ENCODE measurements at regions of chr15 and their contacts with region 1.

Region 1: DNA sequence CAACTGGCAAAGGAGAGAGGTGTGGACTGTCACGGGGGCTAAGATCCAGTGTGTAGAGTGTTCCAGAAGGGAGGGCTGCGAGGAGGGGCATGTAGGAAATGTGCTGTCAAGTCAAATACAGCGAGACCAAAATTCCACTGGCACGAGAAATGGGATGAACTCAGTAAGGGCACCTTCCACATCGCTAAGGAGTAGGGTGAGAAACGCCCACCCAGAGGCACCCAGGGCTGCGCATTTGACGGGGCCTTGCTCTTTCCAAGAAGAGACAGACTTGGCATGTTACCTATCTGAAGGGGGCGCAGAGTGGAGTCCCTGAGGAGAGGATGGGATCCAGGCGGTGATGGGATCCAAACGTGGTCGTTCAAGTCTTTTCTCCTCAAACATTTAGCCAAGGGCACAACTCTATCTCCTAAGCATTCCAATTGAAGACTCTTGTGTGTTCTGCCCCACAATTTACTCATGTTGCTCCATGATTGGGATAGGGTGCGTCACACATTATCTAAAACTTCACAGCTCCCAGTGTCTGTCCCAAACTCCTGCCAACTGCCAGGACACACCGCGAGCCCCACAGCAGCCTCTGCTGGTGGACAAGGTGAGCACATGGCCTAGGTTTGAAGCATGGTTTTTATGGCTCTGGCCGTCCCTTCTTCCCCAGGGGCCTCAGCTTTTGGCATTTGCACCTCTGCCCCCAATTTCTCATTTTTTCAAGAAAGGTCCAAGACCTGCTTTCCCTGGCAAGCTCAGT is 7.6 kb downstream of the SELENOS start:
- DNase-seq: no peak
- ATAC-seq: no peak
- H3K4me3 ChIP-seq: no peak overlapping the region
- H3K27ac ChIP-seq: no peak overlapping the region
- H3K4me1 ChIP-seq: peaks cover 15% of the 10 kb centered on the region
- H3K27me3 ChIP-seq: no peaks in the 10 kb centered on the region
- CTCF ChIP-seq: peak; percentile 30 to 60 (median 40); a peak in 5 of 6 replicates
- EP300 ChIP-seq: no peak
- POLR2A ChIP-seq: no peak; the same call in 1 of the 2 replicates
- RAD21 ChIP-seq: peak; percentile 16; the same call in 1 of the 2 replicates

Region 2: DNA sequence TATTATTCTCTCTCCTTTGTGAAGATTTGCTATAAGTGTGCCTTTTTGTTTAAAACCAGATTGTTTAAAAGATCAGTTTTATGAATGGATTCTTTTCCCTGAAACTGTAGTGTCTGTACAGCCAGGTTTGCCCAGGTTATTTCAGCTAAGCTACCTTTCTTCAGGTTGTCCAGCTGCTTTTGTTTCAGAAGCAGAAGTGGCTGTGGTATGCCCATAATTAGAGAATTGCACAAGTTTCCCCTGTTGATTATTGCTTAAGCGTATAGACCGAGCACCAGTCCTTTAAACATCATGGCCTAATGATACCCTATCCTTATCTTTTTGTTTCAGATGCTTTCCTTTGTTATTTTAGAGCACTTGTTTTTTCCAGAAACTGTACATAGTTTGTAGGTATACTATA is 657.1 kb before region 1 on chr15:
- CTCF ChIA-PET with region 1: no interaction called
- POLR2A ChIA-PET with region 1: no interaction called
- RAD21 ChIA-PET with region 1: no interaction called
- SMC1A ChIA-PET with region 1: no interaction called
- in situ Hi-C with region 1: loop called (anchors 10 kb)
- intact Hi-C with region 1: no loop called
- DNase-seq: no peak
- ATAC-seq: no peak
- H3K4me3 ChIP-seq: no peak overlapping the region
- H3K27ac ChIP-seq: no peak overlapping the region
- H3K4me1 ChIP-seq: no peaks in the 10 kb centered on the region
- H3K27me3 ChIP-seq: no peaks in the 10 kb centered on the region
- CTCF ChIP-seq: no peak
- EP300 ChIP-seq: no peak
- POLR2A ChIP-seq: no peak
- RAD21 ChIP-seq: no peak

Region 3: GRCh38 chr15:101024073-101024695 is 245.5 kb before region 1 on chr15:
- CTCF ChIA-PET with region 1: interaction called, 3 read pairs
- POLR2A ChIA-PET with region 1: no interaction called
- RAD21 ChIA-PET with region 1: no interaction called
- SMC1A ChIA-PET with region 1: interaction called, 3 read pairs
- in situ Hi-C with region 1: loop called (anchors 5 kb)
- intact Hi-C with region 1: no loop called
- DNase-seq: no peak
- ATAC-seq: no peak
- H3K4me3 ChIP-seq: no peak overlapping the region
- H3K27ac ChIP-seq: no peak overlapping the region
- H3K4me1 ChIP-seq: no peaks in the 10 kb centered on the region
- H3K27me3 ChIP-seq: no peaks in the 10 kb centered on the region
- CTCF ChIP-seq: no peak
- EP300 ChIP-seq: no peak
- POLR2A ChIP-seq: no peak
- RAD21 ChIP-seq: no peak

Region 4: DNA sequence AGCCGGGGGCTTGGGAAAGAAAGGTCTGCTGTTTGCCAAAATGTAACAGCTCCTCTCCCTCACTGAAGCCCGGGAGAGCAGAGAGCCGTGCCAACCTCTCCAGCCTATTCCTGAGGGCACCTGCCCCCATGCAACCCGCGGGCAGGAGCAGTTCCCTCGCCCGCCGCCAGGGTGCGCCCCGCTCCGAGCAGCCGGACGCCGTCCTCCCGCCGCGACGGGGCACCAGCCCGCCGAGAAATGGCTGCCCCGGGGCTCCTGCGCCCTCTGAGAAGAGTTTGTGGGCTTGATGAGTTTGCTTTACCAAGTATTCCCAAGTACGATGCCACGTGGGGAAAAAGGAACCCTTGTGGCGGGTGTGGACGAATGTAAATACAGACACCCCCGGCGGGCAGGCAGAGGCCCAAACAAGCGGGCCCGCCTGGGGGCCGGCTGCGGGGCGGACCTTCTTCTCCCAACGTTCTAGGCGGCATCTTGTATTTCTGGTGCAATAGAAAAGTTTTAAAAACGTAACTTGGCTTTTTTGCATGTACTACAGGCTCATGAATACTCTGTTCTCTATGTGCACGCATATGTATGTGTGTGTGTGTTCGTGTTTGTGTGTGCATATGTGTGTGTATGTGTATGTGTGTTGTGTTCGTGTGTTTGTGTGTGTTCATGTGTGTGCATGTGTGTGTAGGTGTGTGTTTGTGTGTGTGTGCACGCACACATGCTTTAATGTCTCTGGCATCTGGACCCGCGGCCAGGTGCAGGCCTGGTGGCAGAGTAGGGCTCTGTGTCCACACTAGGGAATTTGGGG is 180.7 kb before region 1 on chr15:
- CTCF ChIA-PET with region 1: no interaction called
- POLR2A ChIA-PET with region 1: no interaction called
- RAD21 ChIA-PET with region 1: interaction called, 4 read pairs
- SMC1A ChIA-PET with region 1: interaction called, 3 read pairs
- in situ Hi-C with region 1: loop called (anchors 5 kb)
- intact Hi-C with region 1: no loop called
- DNase-seq: no peak
- ATAC-seq: peak; percentile 98
- H3K4me3 ChIP-seq: no peak overlapping the region
- H3K27ac ChIP-seq: no peak overlapping the region
- H3K4me1 ChIP-seq: no peaks in the 10 kb centered on the region
- H3K27me3 ChIP-seq: no peaks in the 10 kb centered on the region
- CTCF ChIP-seq: peak; percentile 94 to 98 (median 97)
- EP300 ChIP-seq: no peak
- POLR2A ChIP-seq: no peak
- RAD21 ChIP-seq: peak; percentile 80

Region 5: GRCh38 chr15:101288908-101289513 is 19.4 kb after region 1 on chr15:
- CTCF ChIA-PET with region 1: interaction called, 52 read pairs
- POLR2A ChIA-PET with region 1: interaction called, 21 read pairs
- RAD21 ChIA-PET with region 1: interaction called, 24 read pairs
- SMC1A ChIA-PET with region 1: interaction called, 18 read pairs
- in situ Hi-C with region 1: no loop called
- intact Hi-C with region 1: no loop called
- DNase-seq: no peak
- ATAC-seq: peak; percentile 48
- H3K4me3 ChIP-seq: no peak overlapping the region
- H3K27ac ChIP-seq: no peak overlapping the region
- H3K4me1 ChIP-seq: peaks cover 4% of the 10 kb centered on the region
- H3K27me3 ChIP-seq: no peaks in the 10 kb centered on the region
- CTCF ChIP-seq: peak; percentile 52 to 58 (median 53)
- EP300 ChIP-seq: no peak
- POLR2A ChIP-seq: no peak
- RAD21 ChIP-seq: peak; percentile 45

Measured in GM12878 (cell line).